ENCODE measurements at regions of chr14 and their contacts with region 1.

Region 1: DNA sequence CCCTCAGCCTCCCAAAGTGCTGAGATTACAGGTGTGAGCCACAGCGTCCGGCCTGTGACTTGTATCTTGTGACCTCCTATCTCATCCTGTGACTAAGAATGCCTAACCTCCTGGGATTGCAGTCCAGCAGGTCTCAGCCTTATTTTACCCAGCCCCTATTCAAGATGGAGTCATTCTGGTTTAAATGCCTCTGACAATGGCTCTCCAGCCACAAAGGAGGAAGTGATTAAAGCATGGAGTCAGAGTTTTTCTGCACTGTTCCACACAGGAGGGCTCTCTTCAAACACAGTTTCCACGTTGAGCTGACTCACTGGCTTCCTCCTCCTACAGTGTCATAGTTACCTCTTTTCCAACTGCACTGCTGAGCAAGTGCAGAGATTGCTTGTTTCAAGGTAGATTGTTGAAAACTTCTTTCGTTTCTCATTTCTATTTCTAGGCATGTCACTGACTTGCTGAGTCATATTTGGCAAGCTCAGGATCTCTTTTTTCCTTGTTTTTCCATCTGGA is 383.8 kb downstream of the PCNX1 start:
- DNase-seq: peak; percentile 70
- H3K4me3 Mint-ChIP-seq: no peak overlapping the region
- H3K27ac Mint-ChIP-seq: peak overlapping the region; percentile 61
- H3K4me1 Mint-ChIP-seq: peaks cover 17% of the 10 kb centered on the region
- H3K27me3 Mint-ChIP-seq: no peaks in the 10 kb centered on the region

Region 2: GRCh38 chr14:71221119-71221518 is 69.9 kb before region 1 on chr14:
- CTCF ChIA-PET with region 1: no interaction called
- POLR2A ChIA-PET with region 1: no interaction called
- intact Hi-C with region 1: loop called (anchors 1 kb)
- DNase-seq: no peak
- H3K4me3 Mint-ChIP-seq: no peak overlapping the region
- H3K27ac Mint-ChIP-seq: no peak overlapping the region
- H3K4me1 Mint-ChIP-seq: peaks cover 24% of the 10 kb centered on the region
- H3K27me3 Mint-ChIP-seq: no peaks in the 10 kb centered on the region

Region 3: DNA sequence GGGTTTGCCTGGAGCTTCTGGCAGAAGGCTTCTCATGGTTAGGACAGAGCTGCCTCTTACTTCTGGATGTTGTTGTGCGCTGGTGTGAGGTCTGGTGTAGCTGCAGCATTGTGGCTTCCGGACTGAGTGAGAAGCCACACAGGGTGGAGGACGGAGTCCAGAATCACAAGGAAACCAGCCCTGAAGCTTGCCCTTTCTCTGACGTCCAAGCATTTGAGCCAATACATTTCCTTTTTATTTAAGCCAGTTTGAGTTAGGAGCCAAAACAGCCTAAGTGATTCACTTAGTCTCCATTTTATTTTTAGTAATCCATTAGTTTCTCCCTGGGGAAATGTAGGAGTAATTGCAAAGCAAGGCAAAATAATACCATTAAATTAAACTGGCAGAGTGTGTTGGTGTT is 238.8 kb after region 1 on chr14:
- CTCF ChIA-PET with region 1: no interaction called
- POLR2A ChIA-PET with region 1: no interaction called
- intact Hi-C with region 1: no loop called
- DNase-seq: no peak
- H3K4me3 Mint-ChIP-seq: no peak overlapping the region
- H3K27ac Mint-ChIP-seq: no peak overlapping the region
- H3K4me1 Mint-ChIP-seq: no peaks in the 10 kb centered on the region
- H3K27me3 Mint-ChIP-seq: no peaks in the 10 kb centered on the region